Sciatic nerve (tissue), 2 donors: ENCODE measurements at regions of chr1 and their contacts with region 1.

Region 1: DNA sequence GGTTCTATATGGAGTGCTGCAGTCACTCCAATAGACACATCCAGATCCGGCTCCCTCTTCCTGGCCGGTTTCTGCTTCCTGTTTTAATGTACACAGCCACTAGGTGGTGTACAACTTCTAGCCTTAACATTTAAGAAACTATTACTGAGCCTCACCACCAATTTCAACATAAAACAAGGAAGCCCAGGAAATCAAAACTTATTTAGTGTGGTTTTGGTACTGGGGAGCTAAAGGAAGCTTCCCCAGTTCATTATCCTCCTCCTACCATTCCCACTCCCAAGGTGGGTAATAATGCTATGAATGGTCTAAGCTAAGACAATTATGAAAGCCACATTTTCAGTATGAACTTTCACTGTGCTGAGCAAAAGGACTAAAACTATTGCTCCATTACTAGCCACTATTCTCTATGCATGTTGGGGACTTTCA is 25.5 kb upstream of the MTMR11 start:
- DNase-seq: no peak
- ATAC-seq: peak; percentile 82

Region 2: GRCh38 chr1:150049926-150050325 is 87.8 kb after region 1 on chr1:
- intact Hi-C with region 1: loop called (anchors 1 kb)
- DNase-seq: no peak
- ATAC-seq: no peak